ENCODE measurements at regions of chr1 and their contacts with region 1.

Region 1: DNA sequence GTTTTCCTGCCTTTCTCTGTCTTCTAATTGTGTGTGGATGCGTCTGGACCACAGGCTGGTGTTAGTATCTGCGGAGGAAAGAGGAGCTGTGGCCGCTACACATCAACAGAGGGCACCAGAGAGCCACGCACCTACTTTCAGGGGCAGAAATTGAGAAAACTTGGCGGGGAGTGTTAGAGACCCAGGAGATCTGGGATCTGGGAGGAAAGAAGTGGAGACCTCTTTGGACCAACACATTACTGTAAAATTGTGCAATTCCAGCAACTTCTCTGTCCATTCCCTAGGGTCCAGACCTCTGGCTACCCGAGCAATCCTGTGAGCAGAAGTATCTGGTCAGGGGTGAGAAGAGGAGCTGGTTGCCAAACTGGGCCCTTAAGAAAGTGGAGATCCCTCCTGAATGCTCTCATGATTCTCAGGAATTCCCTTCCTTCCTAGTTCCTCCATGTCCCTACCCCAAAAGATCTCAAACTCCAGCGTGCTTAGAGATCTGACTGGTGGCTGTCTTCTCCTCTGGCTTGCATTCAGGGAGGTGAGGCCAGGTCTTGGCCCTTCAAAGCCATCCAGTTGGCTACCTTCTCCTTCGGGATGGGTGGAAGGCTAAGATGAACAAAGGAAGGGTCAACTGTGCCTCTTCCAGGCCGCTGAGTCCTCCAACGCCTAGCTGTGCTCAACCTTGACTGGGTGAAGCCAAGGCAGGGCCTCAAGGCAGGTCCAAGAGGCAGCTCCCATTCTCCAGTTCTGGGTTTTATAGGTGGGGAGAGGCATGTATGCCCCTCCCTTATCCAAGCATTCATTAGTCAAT is 1.2 kb upstream of the KIRREL1 start:
- DNase-seq: peak; percentile 50 to 62 (median 55)
- ATAC-seq: peak; percentile 79 to 87 (median 83)
- H3K4me3 ChIP-seq: no peak overlapping the region
- H3K27ac ChIP-seq: no peak overlapping the region
- H3K4me1 ChIP-seq: peaks cover 0 to 6% (median 0%) of the 10 kb centered on the region in 4 donors
- H3K27me3 ChIP-seq: peaks cover 0 to 3% of the 10 kb centered on the region in 2 donors
- CTCF ChIP-seq: peak; percentile 77 to 88 (median 86)
- POLR2A ChIP-seq: no peak

Region 2: GRCh38 chr1:158087320-158087927 is 95.2 kb after region 1 on chr1:
- intact Hi-C with region 1: loop called in 1 of 2 experiments (anchors 5 kb)
- DNase-seq: peak in 2 of 3 donors; percentile 41 to 55
- ATAC-seq: peak; percentile 73 to 93 (median 78)
- H3K4me3 ChIP-seq: no peak overlapping the region
- H3K27ac ChIP-seq: no peak overlapping the region
- H3K4me1 ChIP-seq: no peaks in the 10 kb centered on the region
- H3K27me3 ChIP-seq: no peaks in the 10 kb centered on the region
- CTCF ChIP-seq: peak; percentile 68 to 86 (median 80)
- POLR2A ChIP-seq: no peak

Region 3: GRCh38 chr1:158117854-158118704 is 125.8 kb after region 1 on chr1:
- intact Hi-C with region 1: loop called in 1 of 2 experiments (anchors 10 kb)
- DNase-seq: peak in 2 of 3 donors; percentile 38 to 60
- ATAC-seq: peak; percentile 70 to 77 (median 71)
- H3K4me3 ChIP-seq: no peak overlapping the region
- H3K27ac ChIP-seq: no peak overlapping the region
- H3K4me1 ChIP-seq: peaks cover 0 to 4% (median 0%) of the 10 kb centered on the region in 4 donors
- H3K27me3 ChIP-seq: no peaks in the 10 kb centered on the region
- CTCF ChIP-seq: peak; percentile 12 to 57 (median 37)
- POLR2A ChIP-seq: no peak